Heart left ventricle (tissue), 16 donors: ENCODE measurements at regions of chr1 and their contacts with region 1.

Region 1: GRCh38 chr1:109910123-109910962 is at the start of gene CSF1:
- DNase-seq: peak; percentile 82 to 88 (median 86)
- ATAC-seq: peak; percentile 66 to 84 (median 74)
- H3K4me3 ChIP-seq: peak within 1 kb of the TSS; percentile 71 to 97 (median 88)
- H3K27ac ChIP-seq: peak within 1 kb of the TSS; percentile 59 to 93 (median 88)
- H3K4me1 ChIP-seq: peaks cover 4 to 66% (median 47%) of the 10 kb centered on the region in 12 donors
- H3K27me3 ChIP-seq: peaks cover 0 to 9% (median 0%) of the 10 kb centered on the region in 9 donors
- CTCF ChIP-seq: peak in 1 of 12 donors; percentile 21
- POLR2A ChIP-seq: peak in 1 of 2 donors; percentile 57
- total RNA-seq, gene CSF1: 9.0 to 64.8 (median 14.5) TPM

Region 2: GRCh38 chr1:109802901-109803561 is 107.3 kb before region 1 on chr1:
- intact Hi-C with region 1: loop called in 1 of 10 experiments (anchors 5 kb)
- DNase-seq: peak in 2 of 5 donors; percentile 25 to 47
- ATAC-seq: peak; percentile 67 to 86 (median 74)
- H3K4me3 ChIP-seq: no peak overlapping the region
- H3K27ac ChIP-seq: peak overlapping the region in 8 of 12 donors; percentile 4 to 69 (median 38)
- H3K4me1 ChIP-seq: peaks cover 0 to 37% (median 18%) of the 10 kb centered on the region in 12 donors
- H3K27me3 ChIP-seq: no peaks in the 10 kb centered on the region
- CTCF ChIP-seq: no peak
- POLR2A ChIP-seq: no peak

Region 3: DNA sequence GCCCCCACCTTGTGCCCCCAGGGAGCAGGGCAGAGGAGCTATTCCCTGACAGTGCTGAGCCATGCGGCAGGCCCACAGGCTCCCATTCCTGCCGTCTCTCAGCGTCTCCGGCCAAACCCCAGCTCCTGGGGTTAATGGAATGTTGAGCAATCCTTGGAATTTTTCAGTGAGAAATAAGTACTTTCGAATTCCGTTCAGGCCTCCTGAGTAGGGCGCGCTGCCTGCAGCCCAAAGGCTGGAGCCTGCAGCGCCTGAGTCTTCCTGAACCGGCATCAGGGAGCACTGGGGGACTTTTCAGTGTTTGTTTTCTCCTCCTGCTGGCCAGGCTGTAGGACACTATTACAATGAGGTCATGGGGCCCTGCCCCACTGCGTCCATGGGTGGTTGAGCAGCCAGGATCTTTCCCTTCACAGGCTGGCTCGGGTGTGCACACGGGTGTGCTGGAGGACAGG is 33.0 kb before region 1 on chr1:
- intact Hi-C with region 1: loop called in 1 of 10 experiments (anchors 1 kb)
- DNase-seq: peak; percentile 57 to 84 (median 65)
- ATAC-seq: peak; percentile 65 to 94 (median 90)
- H3K4me3 ChIP-seq: peak overlapping the region in 2 of 12 donors; percentile 2 to 13
- H3K27ac ChIP-seq: peak overlapping the region; percentile 62 to 86 (median 80)
- H3K4me1 ChIP-seq: peaks cover 0 to 50% (median 20%) of the 10 kb centered on the region in 12 donors
- H3K27me3 ChIP-seq: no peaks in the 10 kb centered on the region
- CTCF ChIP-seq: peak in 8 of 12 donors; percentile 8 to 44 (median 25)
- POLR2A ChIP-seq: no peak

Region 4: GRCh38 chr1:109895720-109896504 is 14.4 kb before region 1 on chr1:
- intact Hi-C with region 1: loop called in 1 of 10 experiments (anchors 1 kb)
- DNase-seq: peak; percentile 63 to 81 (median 77)
- ATAC-seq: peak; percentile 44 to 84 (median 76)
- H3K4me3 ChIP-seq: peak overlapping the region in 1 of 12 donors; percentile 18
- H3K27ac ChIP-seq: peak overlapping the region; percentile 12 to 83 (median 68)
- H3K4me1 ChIP-seq: peaks cover 0 to 79% (median 52%) of the 10 kb centered on the region in 12 donors
- H3K27me3 ChIP-seq: no peaks in the 10 kb centered on the region
- CTCF ChIP-seq: no peak
- POLR2A ChIP-seq: no peak

Region 5: GRCh38 chr1:109984456-109985275 is 74.3 kb after region 1 on chr1 and contains the start of gene AHCYL1:
- intact Hi-C with region 1: loop called in 5 of 10 experiments (anchors 5 kb)
- DNase-seq: peak; percentile 100
- ATAC-seq: peak; percentile 96 to 98 (median 98)
- H3K4me3 ChIP-seq: peak within 1 kb of the TSS; percentile 61 to 97 (median 93)
- H3K27ac ChIP-seq: peak within 1 kb of the TSS; percentile 90 to 99 (median 98)
- H3K4me1 ChIP-seq: peaks cover 9 to 64% (median 55%) of the 10 kb centered on the region in 12 donors
- H3K27me3 ChIP-seq: no peaks in the 10 kb centered on the region
- CTCF ChIP-seq: peak; percentile 96 to 100 (median 98)
- POLR2A ChIP-seq: peak; percentile 95 to 98
- total RNA-seq, gene AHCYL1: 31.1 to 56.7 (median 48.7) TPM